Caco-2 (cell line): ENCODE measurements at regions of chr12 and their contacts with region 1.

Region 1: DNA sequence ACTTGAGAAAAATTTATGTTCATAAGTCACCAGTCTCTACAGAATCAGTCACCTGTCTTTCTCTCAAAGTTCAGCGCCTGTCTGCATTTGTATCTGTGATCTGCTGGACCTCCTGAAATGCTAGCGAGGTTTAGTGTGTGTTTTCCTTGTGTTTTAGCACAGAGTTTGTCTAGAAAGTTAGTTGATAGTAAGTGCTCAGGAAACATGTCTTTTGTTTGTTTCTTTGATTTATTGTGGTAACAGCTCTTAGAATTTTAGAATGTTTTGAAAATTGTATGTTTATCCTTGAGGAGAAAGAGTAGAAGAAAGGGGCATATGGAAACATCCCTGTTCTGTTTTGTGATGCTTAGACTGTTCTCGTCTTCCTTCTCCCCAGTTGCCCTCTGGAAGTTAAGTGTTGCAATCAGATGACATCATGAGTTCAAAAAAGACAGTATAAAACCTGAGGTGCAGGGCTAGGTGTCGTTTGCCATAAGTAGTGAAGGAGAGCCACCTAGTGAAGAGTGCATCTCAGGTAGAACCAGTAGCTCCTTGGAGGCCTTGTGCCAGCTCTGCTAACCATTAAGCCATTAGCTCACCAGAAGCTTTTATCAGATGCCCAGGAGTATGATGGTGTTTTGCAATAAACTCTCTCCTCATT is 44.8 kb downstream of the FBXW8 start:
- DNase-seq: peak; percentile 63 to 74
- H3K4me3 ChIP-seq: no peak overlapping the region
- H3K4me3 Mint-ChIP-seq: no peak overlapping the region
- H3K27ac Mint-ChIP-seq: no peak overlapping the region
- H3K4me1 ChIP-seq: no peaks in the 10 kb centered on the region
- H3K4me1 Mint-ChIP-seq: peaks cover 11% of the 10 kb centered on the region
- H3K27me3 ChIP-seq: no peaks in the 10 kb centered on the region
- H3K27me3 Mint-ChIP-seq: no peaks in the 10 kb centered on the region
- CTCF ChIP-seq: peak; percentile 30 to 64

Region 2: DNA sequence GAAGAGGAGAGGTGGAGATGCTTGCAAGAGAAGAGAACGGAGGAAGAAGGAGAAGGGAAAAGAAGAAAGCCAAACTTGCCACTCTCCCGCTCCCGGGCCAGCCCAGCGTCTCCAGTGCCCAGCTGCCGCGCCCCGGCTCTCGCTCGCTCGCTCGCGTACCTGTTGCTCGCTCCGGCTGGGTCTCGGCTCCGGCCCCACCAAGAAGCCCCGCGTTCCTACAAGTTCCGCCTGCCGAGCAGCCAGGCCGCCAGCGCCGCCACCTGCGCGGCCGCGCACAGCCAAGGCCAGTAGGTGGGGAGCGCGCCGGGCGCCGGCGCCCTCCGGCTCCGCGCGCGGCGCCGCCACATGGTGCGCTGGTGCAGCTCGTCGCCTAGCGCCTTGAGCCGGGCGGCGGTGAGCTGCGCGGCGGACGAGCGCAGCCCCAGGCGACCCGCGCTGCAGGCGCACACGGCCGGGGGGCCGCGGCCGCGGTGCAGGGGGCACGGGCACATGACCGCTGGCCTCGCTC is 74.6 kb before region 1 on chr12:
- CTCF ChIA-PET with region 1: interaction called, 6 read pairs
- POLR2A ChIA-PET with region 1: no interaction called
- intact Hi-C with region 1: loop called (anchors 1 kb)
- DNase-seq: peak; percentile 54 to 76
- H3K4me3 ChIP-seq: peak overlapping the region; percentile 37
- H3K4me3 Mint-ChIP-seq: peak overlapping the region; percentile 85
- H3K27ac Mint-ChIP-seq: peak overlapping the region; percentile 34
- H3K4me1 ChIP-seq: peaks cover 12% of the 10 kb centered on the region; the same call in 1 of the 2 replicates
- H3K4me1 Mint-ChIP-seq: peaks cover 21% of the 10 kb centered on the region
- H3K27me3 ChIP-seq: peaks cover 11% of the 10 kb centered on the region
- H3K27me3 Mint-ChIP-seq: peaks cover 32% of the 10 kb centered on the region
- CTCF ChIP-seq: peak in 1 of 2 experiments; percentile 2

Region 3: GRCh38 chr12:116916714-116917114 is 38.8 kb before region 1 on chr12:
- CTCF ChIA-PET with region 1: interaction called, 6 read pairs
- POLR2A ChIA-PET with region 1: no interaction called
- intact Hi-C with region 1: loop called (anchors 1 kb)
- DNase-seq: peak; percentile 74 to 80
- H3K4me3 ChIP-seq: no peak overlapping the region
- H3K4me3 Mint-ChIP-seq: no peak overlapping the region
- H3K27ac Mint-ChIP-seq: peak overlapping the region; percentile 83
- H3K4me1 ChIP-seq: peaks cover 52% of the 10 kb centered on the region
- H3K4me1 Mint-ChIP-seq: peaks cover 42% of the 10 kb centered on the region
- H3K27me3 ChIP-seq: no peaks in the 10 kb centered on the region
- H3K27me3 Mint-ChIP-seq: no peaks in the 10 kb centered on the region
- CTCF ChIP-seq: peak in 1 of 2 experiments; percentile 49